ENCODE measurements at regions of chr11 and their contacts with region 1.

Region 1: GRCh38 chr11:77411717-77412441 is 62.0 kb downstream of the PAK1 start:
- DNase-seq: peak; percentile 40
- ATAC-seq: peak; percentile 93
- H3K4me3 ChIP-seq: peak overlapping the region; percentile 93
- H3K27ac ChIP-seq: peak overlapping the region; percentile 79
- H3K4me1 ChIP-seq: peaks cover 8% of the 10 kb centered on the region
- H3K27me3 ChIP-seq: no peaks in the 10 kb centered on the region
- CTCF ChIP-seq: peak; percentile 8 to 29 (median 19); a peak in 3 of 6 replicates
- EP300 ChIP-seq: no peak
- POLR2A ChIP-seq: peak; percentile 87
- RAD21 ChIP-seq: peak; percentile 44

Region 2: GRCh38 chr11:77400773-77401449 is 11.0 kb before region 1 on chr11:
- CTCF ChIA-PET with region 1: interaction called, 20 read pairs
- POLR2A ChIA-PET with region 1: interaction called, 5 read pairs
- RAD21 ChIA-PET with region 1: interaction called, 23 read pairs
- SMC1A ChIA-PET with region 1: interaction called, 25 read pairs
- in situ Hi-C with region 1: no loop called
- intact Hi-C with region 1: no loop called
- DNase-seq: no peak
- ATAC-seq: peak; percentile 75
- H3K4me3 ChIP-seq: no peak overlapping the region
- H3K27ac ChIP-seq: peak overlapping the region; percentile 17; the same call in 1 of the 2 replicates
- H3K4me1 ChIP-seq: peaks cover 19% of the 10 kb centered on the region
- H3K27me3 ChIP-seq: no peaks in the 10 kb centered on the region
- CTCF ChIP-seq: peak; percentile 14 to 28 (median 26); a peak in 4 of 6 replicates
- EP300 ChIP-seq: no peak
- POLR2A ChIP-seq: no peak
- RAD21 ChIP-seq: 0 out of 2 replicates have a peak, but pooled peaks have one; percentile 14

Region 3: GRCh38 chr11:77424644-77425043 is 12.8 kb after region 1 on chr11:
- CTCF ChIA-PET with region 1: interaction called, 3 read pairs
- POLR2A ChIA-PET with region 1: interaction called, 3 read pairs
- RAD21 ChIA-PET with region 1: interaction called, 10 read pairs
- SMC1A ChIA-PET with region 1: interaction called, 23 read pairs
- in situ Hi-C with region 1: no loop called
- intact Hi-C with region 1: no loop called
- DNase-seq: no peak
- ATAC-seq: no peak
- H3K4me3 ChIP-seq: no peak overlapping the region
- H3K27ac ChIP-seq: no peak overlapping the region
- H3K4me1 ChIP-seq: peaks cover under 1% of the 10 kb centered on the region
- H3K27me3 ChIP-seq: no peaks in the 10 kb centered on the region
- CTCF ChIP-seq: no peak
- EP300 ChIP-seq: no peak
- POLR2A ChIP-seq: no peak
- RAD21 ChIP-seq: no peak

Region 4: DNA sequence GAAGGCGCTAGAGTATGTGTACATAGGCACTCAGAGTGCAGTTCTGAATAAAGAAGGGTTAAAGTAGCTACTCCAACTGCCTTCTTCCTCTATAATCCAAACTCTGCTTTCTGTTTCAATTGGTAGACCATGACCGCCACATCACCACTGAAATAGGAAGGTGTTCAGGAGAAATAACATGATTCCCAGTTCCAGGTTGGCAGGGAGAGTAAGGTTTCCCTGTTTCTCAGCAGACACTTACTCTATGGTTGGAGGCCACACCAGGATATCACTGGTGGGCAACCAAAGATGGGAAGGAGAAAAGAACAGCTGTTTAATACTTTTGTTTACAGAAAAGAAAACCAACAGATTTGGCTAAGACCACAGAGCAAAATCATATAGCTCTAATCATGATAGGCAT is 24.1 kb after region 1 on chr11:
- CTCF ChIA-PET with region 1: interaction called, 9 read pairs
- POLR2A ChIA-PET with region 1: interaction called, 30 read pairs
- RAD21 ChIA-PET with region 1: interaction called, 28 read pairs
- SMC1A ChIA-PET with region 1: interaction called, 17 read pairs
- in situ Hi-C with region 1: no loop called
- intact Hi-C with region 1: no loop called
- DNase-seq: no peak
- ATAC-seq: peak; percentile 55
- H3K4me3 ChIP-seq: peak overlapping the region; percentile 50; the same call in 1 of the 2 replicates
- H3K27ac ChIP-seq: peak overlapping the region; percentile 35; the same call in 1 of the 2 replicates
- H3K4me1 ChIP-seq: peaks cover 33% of the 10 kb centered on the region; the same call in 1 of the 2 replicates
- H3K27me3 ChIP-seq: no peaks in the 10 kb centered on the region
- CTCF ChIP-seq: no peak
- EP300 ChIP-seq: no peak
- POLR2A ChIP-seq: no peak
- RAD21 ChIP-seq: no peak

Region 5: DNA sequence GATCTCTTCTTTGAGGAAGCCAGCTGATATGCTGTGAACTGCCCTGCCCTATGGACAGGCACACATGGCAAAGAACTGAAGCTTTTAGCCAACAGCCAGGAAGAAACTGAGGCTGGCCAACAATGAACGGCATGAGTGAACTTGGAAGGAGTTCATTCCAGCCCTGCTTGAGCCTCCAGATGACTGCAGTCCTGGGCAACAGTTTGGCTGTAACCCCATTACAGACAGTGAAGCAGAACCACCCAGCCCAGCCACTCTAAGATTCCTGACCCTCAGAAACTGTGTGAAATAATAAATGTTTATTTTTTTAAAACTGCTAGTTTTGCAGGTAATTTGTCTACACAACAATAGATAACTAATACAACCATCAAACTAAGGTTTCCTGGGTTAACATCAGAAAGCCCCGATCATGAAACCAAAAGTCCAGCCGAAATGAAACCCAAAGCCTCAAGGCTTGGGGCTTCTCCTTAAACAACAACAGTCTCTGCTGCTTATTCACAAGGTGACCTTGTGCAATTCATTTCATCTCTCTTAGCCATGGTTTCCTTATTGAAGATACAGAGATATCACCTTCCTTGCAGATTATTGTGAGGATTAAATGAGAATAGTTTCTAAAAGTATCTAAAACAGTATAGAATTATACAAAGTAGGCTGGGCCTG is 30.6 kb after region 1 on chr11:
- CTCF ChIA-PET with region 1: interaction called, 29 read pairs
- POLR2A ChIA-PET with region 1: interaction called, 30 read pairs
- RAD21 ChIA-PET with region 1: interaction called, 60 read pairs
- SMC1A ChIA-PET with region 1: interaction called, 50 read pairs
- in situ Hi-C with region 1: no loop called
- intact Hi-C with region 1: no loop called
- DNase-seq: no peak
- ATAC-seq: peak; percentile 75
- H3K4me3 ChIP-seq: peak overlapping the region; percentile 17; the same call in 1 of the 2 replicates
- H3K27ac ChIP-seq: peak overlapping the region; percentile 82
- H3K4me1 ChIP-seq: peaks cover 72% of the 10 kb centered on the region
- H3K27me3 ChIP-seq: no peaks in the 10 kb centered on the region
- CTCF ChIP-seq: no peak
- EP300 ChIP-seq: no peak
- POLR2A ChIP-seq: no peak
- RAD21 ChIP-seq: no peak

Region 6: GRCh38 chr11:77449060-77449521 is 37.2 kb after region 1 on chr11:
- CTCF ChIA-PET with region 1: interaction called, 29 read pairs
- POLR2A ChIA-PET with region 1: interaction called, 21 read pairs
- RAD21 ChIA-PET with region 1: interaction called, 60 read pairs
- SMC1A ChIA-PET with region 1: interaction called, 50 read pairs
- in situ Hi-C with region 1: no loop called
- intact Hi-C with region 1: no loop called
- DNase-seq: peak; percentile 91
- ATAC-seq: peak; percentile 76
- H3K4me3 ChIP-seq: peak overlapping the region; percentile 8; the same call in 1 of the 2 replicates
- H3K27ac ChIP-seq: peak overlapping the region; percentile 92
- H3K4me1 ChIP-seq: peaks cover 76% of the 10 kb centered on the region
- H3K27me3 ChIP-seq: no peaks in the 10 kb centered on the region
- CTCF ChIP-seq: no peak
- EP300 ChIP-seq: peak in 1 of 2 experiments; percentile 76; a peak in 3 of 4 replicates
- POLR2A ChIP-seq: no peak
- RAD21 ChIP-seq: peak; percentile 14; the same call in 1 of the 2 replicates

Region 7: GRCh38 chr11:77457340-77457739 is 45.5 kb after region 1 on chr11:
- CTCF ChIA-PET with region 1: interaction called, 14 read pairs
- POLR2A ChIA-PET with region 1: interaction called, 17 read pairs
- RAD21 ChIA-PET with region 1: interaction called, 14 read pairs
- SMC1A ChIA-PET with region 1: interaction called, 17 read pairs
- in situ Hi-C with region 1: no loop called
- intact Hi-C with region 1: no loop called
- DNase-seq: no peak
- ATAC-seq: peak; percentile 52
- H3K4me3 ChIP-seq: peak overlapping the region; percentile 55; the same call in 1 of the 2 replicates
- H3K27ac ChIP-seq: peak overlapping the region; percentile 57
- H3K4me1 ChIP-seq: peaks cover 47% of the 10 kb centered on the region
- H3K27me3 ChIP-seq: no peaks in the 10 kb centered on the region
- CTCF ChIP-seq: no peak
- EP300 ChIP-seq: no peak
- POLR2A ChIP-seq: no peak
- RAD21 ChIP-seq: no peak

Measured in GM12878 (cell line).